K562 (cell line): ENCODE measurements at regions of chr4 and their contacts with region 1.

Region 1: GRCh38 chr4:8832113-8832915 is 39.3 kb downstream of the HMX1 start:
- DNase-seq: no peak
- ATAC-seq: no peak
- H3K4me3 ChIP-seq: no peak overlapping the region
- H3K27ac ChIP-seq: no peak overlapping the region
- H3K4me1 ChIP-seq: no peaks in the 10 kb centered on the region
- H3K27me3 ChIP-seq: peaks cover 3 to 42% of the 10 kb centered on the region in 2 experiments; a peak in 2 of 5 replicates
- CTCF ChIP-seq: no peak
- EP300 ChIP-seq: no peak
- POLR2A ChIP-seq: no peak
- RAD21 ChIP-seq: no peak

Region 2: DNA sequence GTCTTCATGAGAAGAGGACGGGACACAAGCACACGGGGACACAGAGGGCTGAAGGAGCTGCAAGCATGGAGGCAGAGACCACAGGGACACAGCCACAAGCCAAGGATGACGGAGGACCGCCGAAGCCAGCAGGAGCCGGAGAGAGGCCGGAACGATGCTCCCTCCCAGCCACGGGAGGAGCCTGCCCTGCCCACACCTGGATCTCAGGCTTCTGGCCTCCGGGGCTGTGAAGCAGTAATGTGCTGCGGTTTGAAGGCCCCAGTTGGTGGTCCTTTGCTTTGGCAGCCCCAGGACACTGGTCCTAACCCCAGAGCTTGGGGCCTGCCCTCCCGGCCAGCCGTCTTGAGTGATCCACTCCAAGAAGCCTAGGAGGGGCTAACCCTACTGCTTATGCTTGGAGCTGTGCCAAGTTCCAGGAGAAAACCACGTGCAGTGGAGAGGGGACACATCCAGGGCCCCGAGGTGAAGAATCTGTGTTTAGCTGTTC is 46.6 kb before region 1 on chr4:
- CTCF ChIA-PET with region 1: no interaction called
- POLR2A ChIA-PET with region 1: no interaction called
- in situ Hi-C with region 1: loop called (anchors 5 kb)
- intact Hi-C with region 1: no loop called
- DNase-seq: no peak
- ATAC-seq: no peak; the same call in 2 of the 3 replicates
- H3K4me3 ChIP-seq: no peak overlapping the region
- H3K27ac ChIP-seq: no peak overlapping the region
- H3K4me1 ChIP-seq: no peaks in the 10 kb centered on the region
- H3K27me3 ChIP-seq: peaks cover 11 to 43% of the 10 kb centered on the region in 2 experiments; a peak in 4 of 5 replicates
- CTCF ChIP-seq: no peak
- EP300 ChIP-seq: no peak
- POLR2A ChIP-seq: no peak
- RAD21 ChIP-seq: no peak